Activated T-helper 2 cell treated with anti-CD3 and anti-CD28 coated beads, Interferon-gamma antibody, Interleukin-2, Interleukin-4, amounts not matched to agents 10 μg/mL and 5 μg/mL and 100 μg/mL, durations not matched to agents 14 hours and 24 hours and 36 hours (primary cell): ENCODE measurements at regions of chr2 and their contacts with region 1.

Region 1: DNA sequence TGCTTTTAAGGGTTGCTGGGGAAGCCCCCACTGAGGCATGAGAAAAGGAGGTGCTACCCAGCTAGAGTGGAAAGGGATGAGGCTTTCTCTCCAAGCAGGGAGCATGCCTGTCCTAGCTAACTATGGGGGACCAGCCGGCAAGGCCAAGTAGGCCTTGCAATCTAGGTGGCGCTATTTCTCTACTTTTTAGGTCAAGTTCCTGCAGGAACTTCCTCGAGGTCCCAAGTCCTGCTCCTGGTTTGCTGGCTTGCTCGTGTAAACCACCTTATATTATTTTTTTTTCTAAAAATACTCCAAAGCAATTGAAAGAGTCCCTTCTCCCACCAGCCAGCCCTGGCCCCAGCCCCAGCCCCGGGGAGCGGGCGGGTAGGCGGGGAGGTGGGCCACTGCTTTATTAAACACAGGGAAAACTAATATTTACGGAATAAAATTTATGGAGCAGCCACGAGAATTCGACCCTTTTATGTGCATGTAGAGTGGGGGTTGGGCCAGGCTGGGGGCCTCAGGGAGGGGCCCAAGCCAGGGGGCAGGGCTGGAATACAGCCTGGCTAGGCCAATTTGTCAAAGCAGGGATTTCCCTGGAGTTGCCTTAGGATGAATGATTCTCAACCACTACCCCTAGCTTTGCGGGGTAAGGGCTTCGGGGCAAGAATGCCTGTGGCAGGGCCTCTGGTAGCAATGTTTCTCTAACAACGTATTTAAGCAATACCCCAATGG is 12.8 kb upstream of the IHH start:
- DNase-seq: no peak
- H3K4me3 Mint-ChIP-seq: no peak overlapping the region
- H3K27ac Mint-ChIP-seq: no peak overlapping the region
- H3K4me1 Mint-ChIP-seq: no peaks in the 10 kb centered on the region
- H3K27me3 Mint-ChIP-seq: no peaks in the 10 kb centered on the region

Region 2: GRCh38 chr2:219119422-219120043 is 46.0 kb after region 1 on chr2:
- intact Hi-C with region 1: loop called (anchors 2 kb)
- DNase-seq: peak; percentile 39
- H3K4me3 Mint-ChIP-seq: no peak overlapping the region
- H3K27ac Mint-ChIP-seq: no peak overlapping the region
- H3K4me1 Mint-ChIP-seq: peaks cover 4% of the 10 kb centered on the region
- H3K27me3 Mint-ChIP-seq: no peaks in the 10 kb centered on the region

Region 3: GRCh38 chr2:219149667-219150066 is 76.1 kb after region 1 on chr2:
- intact Hi-C with region 1: loop called (anchors 5 kb)
- DNase-seq: no peak
- H3K4me3 Mint-ChIP-seq: no peak overlapping the region
- H3K27ac Mint-ChIP-seq: no peak overlapping the region
- H3K4me1 Mint-ChIP-seq: no peaks in the 10 kb centered on the region
- H3K27me3 Mint-ChIP-seq: no peaks in the 10 kb centered on the region